ACHN (cell line): ENCODE measurements at regions of chr15 and their contacts with region 1.

Region 1: GRCh38 chr15:33700695-33701304 is 267.5 kb upstream of the CHRM5 start:
- DNase-seq: peak; percentile 69

Region 2: DNA sequence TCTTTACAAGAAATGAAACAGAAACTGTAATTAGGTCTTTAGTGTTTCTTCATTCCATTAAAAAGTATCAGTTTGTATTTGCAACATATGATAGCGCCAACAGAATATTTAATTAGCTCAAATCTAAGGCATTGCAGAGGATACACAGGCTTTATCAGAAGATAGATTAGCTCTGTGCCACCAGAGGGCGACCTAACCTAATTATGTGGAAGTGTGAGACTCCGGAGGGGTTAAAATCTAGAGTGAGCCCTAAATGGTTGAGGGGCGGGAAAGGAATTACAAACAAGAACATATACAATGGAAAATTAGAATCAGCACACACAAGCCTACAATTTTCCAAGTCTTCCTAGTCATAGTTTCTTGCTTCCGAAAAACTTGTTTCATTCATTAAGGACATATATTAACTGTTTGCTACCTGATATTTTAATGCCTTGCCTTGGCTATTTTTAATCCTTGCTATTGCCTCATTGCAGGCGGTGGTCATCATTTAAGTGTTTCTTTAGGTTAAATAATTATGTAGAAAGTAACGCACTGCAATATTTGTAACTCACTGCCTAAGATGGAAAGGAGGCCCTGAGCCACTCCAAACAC is 408.0 kb before region 1 on chr15:
- in situ Hi-C with region 1: loop called (anchors 25 kb)
- DNase-seq: peak; percentile 64

Region 3: DNA sequence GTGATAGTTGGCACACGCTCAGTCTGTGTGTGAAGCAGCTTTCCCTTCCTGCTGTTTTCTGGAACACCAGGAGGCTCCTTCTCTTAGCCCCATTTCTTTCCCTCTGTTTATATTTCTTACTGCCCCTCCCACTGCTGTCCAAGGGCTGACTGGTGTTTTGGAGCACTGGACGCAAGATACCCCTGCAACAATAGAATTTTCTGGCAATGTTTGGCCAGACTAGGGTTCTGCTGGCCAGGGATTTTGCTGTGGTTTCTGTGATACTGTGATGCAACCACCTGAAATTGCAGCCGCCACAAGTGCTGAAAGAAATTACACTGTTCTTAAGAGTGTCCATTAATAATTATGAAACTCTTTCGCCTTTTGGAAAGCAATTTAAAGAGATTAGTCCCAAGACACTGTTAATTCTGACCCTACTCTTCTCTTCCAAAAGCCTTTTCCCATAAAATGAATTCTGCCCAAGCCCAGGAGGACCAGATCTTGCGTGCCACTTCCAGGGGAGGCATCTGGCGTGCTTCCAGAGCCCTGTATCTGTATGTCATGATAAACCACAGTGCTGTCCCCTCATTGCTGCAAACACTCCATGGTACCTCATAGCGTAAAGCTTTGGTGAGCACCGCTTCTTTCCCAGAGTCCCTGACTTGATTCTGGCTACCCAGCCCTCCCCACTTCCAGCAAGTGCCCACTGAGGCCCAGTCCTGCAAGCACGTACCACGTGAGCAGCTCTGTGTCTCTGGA is 108.1 kb after region 1 on chr15:
- in situ Hi-C with region 1: no loop called
- DNase-seq: no peak